ENCODE measurements at regions of chr5 and their contacts with region 1.

Region 1: GRCh38 chr5:95664204-95664786 is 17.7 kb downstream of the RFESD start:
- DNase-seq: peak in 4 of 7 donors; percentile 19 to 61 (median 52)
- H3K4me3 ChIP-seq: no peak overlapping the region
- H3K27ac ChIP-seq: peak overlapping the region in 1 of 5 donors; percentile 22
- H3K4me1 ChIP-seq: peaks cover 0 to 14% of the 10 kb centered on the region in 2 donors
- H3K27me3 ChIP-seq: no peaks in the 10 kb centered on the region
- CTCF ChIP-seq: peak; percentile 70 to 91 (median 88)
- POLR2A ChIP-seq: no peak

Region 2: GRCh38 chr5:95730730-95731570 is 66.7 kb after region 1 on chr5 and contains the start of gene RHOBTB3:
- intact Hi-C with region 1: loop called in 1 of 2 experiments (anchors 5 kb)
- DNase-seq: peak; percentile 96 to 98 (median 97)
- H3K4me3 ChIP-seq: peak within 1 kb of the TSS; percentile 3 to 91 (median 82)
- H3K27ac ChIP-seq: peak within 1 kb of the TSS; percentile 77 to 98 (median 98)
- H3K4me1 ChIP-seq: peaks cover 59 to 76% of the 10 kb centered on the region in 2 donors
- H3K27me3 ChIP-seq: no peaks in the 10 kb centered on the region
- CTCF ChIP-seq: peak in 2 of 6 experiments; percentile 2 to 5
- POLR2A ChIP-seq: peak; percentile 78 to 96
- total RNA-seq, gene RHOBTB3: 91.8 to 258 (median 159) TPM

Region 3: DNA sequence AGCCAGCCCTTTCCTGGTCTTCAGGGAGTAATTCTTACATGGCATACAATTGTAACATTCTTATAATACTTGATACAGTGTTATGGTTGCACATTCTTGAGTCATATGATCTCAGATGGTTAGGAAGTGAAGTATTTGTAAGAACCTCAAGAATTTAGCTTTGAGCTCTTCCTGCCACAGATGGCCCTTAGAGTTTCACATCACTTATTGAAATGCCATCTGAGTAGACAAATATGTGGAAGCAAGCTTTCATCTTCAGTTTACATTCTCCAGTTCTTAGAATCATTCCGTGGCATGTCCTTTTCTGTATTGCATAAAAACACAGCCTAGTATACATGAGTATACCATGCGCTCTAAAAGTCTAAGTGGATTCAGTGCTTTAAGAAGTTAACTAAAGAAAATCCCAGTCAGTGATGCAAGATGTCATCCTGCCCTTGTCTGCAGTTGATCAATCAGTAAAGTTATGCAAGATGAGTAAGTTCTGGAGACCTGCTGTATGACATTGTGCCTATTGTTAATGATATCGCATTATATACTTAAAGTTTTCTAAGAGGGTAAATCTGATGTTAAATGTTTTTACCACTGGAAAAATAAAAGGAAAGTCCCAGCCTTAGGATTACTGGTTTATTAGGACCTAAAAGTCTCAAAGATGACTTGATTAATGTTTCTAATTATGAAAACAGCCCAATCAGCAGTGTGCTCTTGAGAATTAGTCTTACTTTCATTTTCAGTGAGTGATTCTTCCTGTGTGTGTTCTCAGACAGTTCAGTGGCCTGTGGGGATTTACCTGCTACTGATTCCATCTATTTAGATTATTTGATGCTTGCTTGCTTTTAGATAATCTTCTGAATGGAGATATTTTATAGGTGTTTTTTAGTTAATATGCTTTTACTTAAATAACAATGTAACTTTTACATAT is 96.2 kb after region 1 on chr5:
- intact Hi-C with region 1: loop called (anchors 10 kb)
- DNase-seq: no peak
- H3K4me3 ChIP-seq: no peak overlapping the region
- H3K27ac ChIP-seq: peak overlapping the region in 4 of 5 donors; percentile 11 to 71 (median 54)
- H3K4me1 ChIP-seq: peaks cover 0 to 41% of the 10 kb centered on the region in 2 donors
- H3K27me3 ChIP-seq: no peaks in the 10 kb centered on the region
- CTCF ChIP-seq: no peak
- POLR2A ChIP-seq: no peak

Region 4: DNA sequence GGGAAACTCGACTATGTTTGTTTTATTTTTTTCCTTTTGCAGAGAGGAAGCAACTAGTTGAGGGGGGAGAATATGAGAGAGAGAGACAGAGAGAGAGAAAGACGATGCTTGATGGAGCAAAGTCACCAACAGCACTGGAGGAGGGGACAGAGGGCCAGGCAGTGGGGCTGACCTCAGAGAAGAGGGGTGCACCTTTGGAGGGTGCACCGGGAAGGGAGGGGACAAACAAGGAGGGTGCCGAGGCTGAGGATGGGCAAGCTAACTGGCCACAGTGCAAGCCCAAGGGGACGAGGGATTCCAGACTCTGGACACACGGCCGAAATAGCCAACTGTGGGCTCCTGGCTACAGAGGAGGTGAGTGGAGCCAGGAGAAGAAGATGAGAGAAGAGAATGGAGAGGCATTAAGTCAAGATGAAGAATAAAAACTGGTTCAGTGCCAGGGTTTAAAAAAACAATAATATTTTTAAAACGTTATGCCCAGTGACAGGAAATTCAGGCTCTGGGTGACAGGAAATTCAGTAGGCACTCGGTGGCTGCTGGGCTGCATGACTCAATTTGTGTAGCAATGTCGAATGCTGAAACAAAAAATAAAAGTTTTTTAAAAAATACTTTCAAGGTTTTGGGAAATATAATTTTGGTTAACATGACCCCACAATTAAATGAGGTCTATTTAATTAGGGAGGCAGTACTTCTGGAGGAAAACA is 171.5 kb after region 1 on chr5:
- intact Hi-C with region 1: loop called in 1 of 2 experiments (anchors 10 kb)
- DNase-seq: peak in 2 of 7 donors; percentile 51 to 53
- H3K4me3 ChIP-seq: peak overlapping the region in 1 of 4 donors; percentile 54
- H3K27ac ChIP-seq: peak overlapping the region in 4 of 5 donors; percentile 19 to 89 (median 48)
- H3K4me1 ChIP-seq: peaks cover 8 to 24% of the 10 kb centered on the region in 2 donors
- H3K27me3 ChIP-seq: no peaks in the 10 kb centered on the region
- CTCF ChIP-seq: no peak
- POLR2A ChIP-seq: no peak

Measured in adrenal gland (tissue), 19 donors.